ENCODE measurements at regions of chr14 and their contacts with region 1.

Region 1: GRCh38 chr14:77542421-77543239 is 44.0 kb upstream of the ISM2 start:
- DNase-seq: no peak
- H3K4me3 ChIP-seq: no peak overlapping the region
- H3K27ac ChIP-seq: no peak overlapping the region
- H3K4me1 ChIP-seq: peaks cover 2% of the 10 kb centered on the region
- H3K27me3 ChIP-seq: no peaks in the 10 kb centered on the region
- CTCF ChIP-seq: no peak
- EP300 ChIP-seq: no peak
- POLR2A ChIP-seq: no peak

Region 2: DNA sequence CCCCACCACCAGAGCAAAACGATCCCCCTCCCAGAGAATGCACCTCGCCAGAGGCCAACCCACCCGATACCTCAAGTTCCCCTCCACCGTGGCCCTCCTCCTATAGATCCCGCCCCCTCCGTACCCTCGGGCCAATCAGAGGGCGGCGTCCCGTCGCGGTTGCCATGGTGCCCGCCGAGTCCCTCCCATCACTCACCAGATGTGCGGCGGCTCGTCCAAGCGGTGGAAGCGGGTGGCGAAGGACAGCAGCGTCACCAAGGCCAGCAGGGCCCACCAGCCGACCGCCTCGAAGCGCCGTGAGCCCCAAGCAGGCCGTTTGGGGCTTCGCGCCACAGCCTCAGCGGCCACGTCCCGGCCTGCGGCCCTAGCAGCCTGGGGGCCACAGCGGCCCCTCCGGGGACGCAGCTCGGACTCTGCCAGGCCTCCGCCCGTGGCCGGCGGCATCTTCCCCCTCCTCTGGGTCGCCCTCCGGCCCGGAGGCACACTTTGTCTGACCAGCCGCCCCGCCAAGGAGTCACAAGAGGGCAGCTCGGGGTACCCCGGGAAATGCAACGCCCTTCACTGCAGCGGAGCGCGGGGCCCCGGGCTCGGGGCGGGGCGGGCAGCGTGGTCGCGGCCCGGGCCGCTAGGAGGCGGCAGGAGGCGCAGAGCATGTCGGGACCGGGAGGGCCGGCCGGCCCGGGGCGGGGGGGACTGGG is 222.2 kb before region 1 on chr14 and contains the start of gene POMT2:
- intact Hi-C with region 1: no loop called
- DNase-seq: peak; percentile 92 to 95 (median 94)
- H3K4me3 ChIP-seq: peak within 1 kb of the TSS; percentile 100
- H3K27ac ChIP-seq: peak within 1 kb of the TSS; percentile 88 to 94
- H3K4me1 ChIP-seq: peaks cover 1% of the 10 kb centered on the region
- H3K27me3 ChIP-seq: no peaks in the 10 kb centered on the region
- CTCF ChIP-seq: peak; percentile 58 to 84 (median 74)
- EP300 ChIP-seq: no peak
- POLR2A ChIP-seq: peak; percentile 69
- total RNA-seq, gene POMT2: 10.8 to 31.7 (median 16.1) TPM

Region 3: DNA sequence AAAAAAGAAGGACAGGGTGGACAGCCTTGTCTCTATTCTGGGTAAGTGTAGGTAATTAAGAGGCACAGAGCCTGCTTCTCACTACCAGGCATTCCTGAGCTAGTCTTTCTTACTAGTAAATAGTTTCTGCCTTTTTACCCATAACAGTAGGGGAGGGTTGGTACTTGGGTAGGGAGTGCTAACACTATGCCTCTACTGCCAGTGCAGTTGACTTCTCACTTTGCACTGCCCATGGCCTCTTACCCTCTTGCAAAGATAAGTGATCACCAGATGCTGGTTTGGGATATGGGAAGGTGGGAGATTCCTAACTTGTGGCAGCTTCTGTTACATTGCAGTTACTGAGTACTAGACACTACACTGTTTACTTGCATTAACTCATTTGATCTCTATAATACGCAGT is 73.1 kb before region 1 on chr14:
- intact Hi-C with region 1: loop called in 1 of 4 experiments (anchors 10 kb)
- DNase-seq: no peak
- H3K4me3 ChIP-seq: no peak overlapping the region
- H3K27ac ChIP-seq: no peak overlapping the region
- H3K4me1 ChIP-seq: no peaks in the 10 kb centered on the region
- H3K27me3 ChIP-seq: no peaks in the 10 kb centered on the region
- CTCF ChIP-seq: no peak
- EP300 ChIP-seq: no peak
- POLR2A ChIP-seq: no peak

Measured in ovary (tissue), 10 donors.